ENCODE measurements at regions of chr2 and their contacts with region 1.

Region 1: GRCh38 chr2:95402370-95403203 is at the start of gene FAHD2A:
- DNase-seq: peak; percentile 97 to 99 (median 98)
- ATAC-seq: peak; percentile 95 to 99 (median 98)
- H3K4me3 ChIP-seq: peak within 1 kb of the TSS; percentile 73 to 98 (median 92)
- H3K27ac ChIP-seq: peak within 1 kb of the TSS in 11 of 12 donors; percentile 65 to 89 (median 85)
- H3K4me1 ChIP-seq: peaks cover 0 to 24% (median 14%) of the 10 kb centered on the region in 12 donors
- H3K27me3 ChIP-seq: no peaks in the 10 kb centered on the region
- CTCF ChIP-seq: no peak
- POLR2A ChIP-seq: peak in 1 of 2 donors; percentile 72
- total RNA-seq, gene FAHD2A: 26.2 to 51.7 (median 34.6) TPM

Region 2: DNA sequence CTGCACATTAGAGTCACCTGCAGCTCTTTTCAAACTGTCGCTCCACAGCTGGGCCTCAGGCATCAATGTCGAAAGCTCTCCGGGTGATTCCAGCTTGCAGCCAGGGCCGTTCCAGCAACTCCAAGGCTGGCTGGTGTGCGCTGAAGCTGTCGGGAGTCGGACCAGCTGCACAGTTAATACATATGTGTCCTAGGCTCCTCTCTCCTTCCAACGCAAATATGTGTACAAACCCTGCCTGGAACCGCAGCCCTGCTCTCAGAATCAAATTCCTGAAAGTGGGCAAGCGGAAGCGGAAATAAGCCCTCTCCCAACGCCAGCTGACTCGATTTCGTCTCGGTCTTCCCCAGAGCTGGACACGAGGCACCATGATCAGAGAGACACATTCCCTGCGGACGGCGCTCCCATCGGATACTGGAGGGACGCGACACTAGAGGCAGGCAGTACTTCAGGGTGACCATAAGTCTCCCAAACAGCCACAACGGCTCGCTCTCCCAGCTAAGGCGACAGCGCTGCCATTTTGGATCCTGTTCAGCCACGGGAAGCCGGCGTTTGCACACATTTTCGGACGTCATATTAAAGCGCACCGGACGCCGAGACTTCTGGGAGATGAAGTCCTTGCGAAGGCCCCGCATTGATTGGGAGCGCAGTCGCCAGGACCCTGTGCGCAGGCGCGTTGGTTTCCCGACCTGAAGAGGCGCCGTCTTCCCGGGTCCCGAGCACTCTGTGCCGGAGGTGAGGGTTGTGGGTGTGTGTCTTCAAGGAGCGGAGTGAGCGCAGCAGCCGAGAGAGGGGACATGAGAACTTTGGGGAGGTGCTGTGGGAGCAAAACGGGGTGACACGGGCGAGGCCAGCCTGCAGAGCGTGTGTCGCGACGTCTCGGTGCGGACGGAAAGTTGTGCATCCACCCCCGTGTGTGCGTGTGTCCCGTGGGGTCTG is 237.2 kb before region 1 on chr2 and contains the start of gene ZNF2:
- intact Hi-C with region 1: loop called in 2 of 10 experiments (anchors 2 to 5 kb)
- DNase-seq: peak; percentile 98 to 99 (median 99)
- ATAC-seq: peak; percentile 96 to 99 (median 98)
- H3K4me3 ChIP-seq: peak within 1 kb of the TSS; percentile 65 to 94 (median 81)
- H3K27ac ChIP-seq: peak within 1 kb of the TSS; percentile 65 to 97 (median 94)
- H3K4me1 ChIP-seq: peaks cover 0 to 25% (median 19%) of the 10 kb centered on the region in 12 donors
- H3K27me3 ChIP-seq: no peaks in the 10 kb centered on the region
- CTCF ChIP-seq: peak in 3 of 12 donors; percentile 5 to 17 (median 10)
- POLR2A ChIP-seq: peak in 1 of 2 donors; percentile 71
- total RNA-seq, gene ZNF2: 2.5 to 5.9 (median 3.5) TPM

Region 3: DNA sequence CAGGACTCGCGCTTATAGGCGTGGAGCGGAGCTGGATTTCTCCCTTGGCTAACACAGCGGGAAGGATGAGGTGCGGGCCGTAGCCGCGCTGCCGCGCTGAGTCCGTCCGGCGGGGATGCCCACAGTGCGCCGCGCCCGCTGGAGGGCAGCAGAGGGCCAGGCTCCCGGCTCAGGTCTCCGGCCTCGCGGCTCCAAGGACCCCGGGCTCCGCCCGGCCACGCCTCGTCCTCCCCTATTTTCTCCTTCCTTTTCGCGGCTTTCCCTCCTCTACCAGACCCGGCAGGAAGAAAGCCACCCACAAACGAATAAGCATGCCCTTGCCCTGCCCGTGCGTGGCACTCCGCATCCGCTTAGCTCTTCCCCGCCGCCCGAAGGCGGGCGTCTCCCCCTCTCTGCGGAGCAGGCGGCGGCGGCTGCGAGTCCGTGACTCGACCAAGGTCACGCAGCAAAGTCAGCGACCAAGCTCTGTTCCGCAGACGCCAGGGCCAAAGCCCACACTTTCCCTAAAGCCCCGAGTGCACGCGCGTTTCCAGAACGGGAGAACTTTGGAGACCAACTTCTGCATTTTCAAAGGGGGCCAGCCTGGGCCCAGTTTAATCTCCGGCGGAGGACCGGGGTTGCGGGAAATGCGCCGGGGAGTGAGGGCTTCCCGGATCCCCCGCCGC is 56.9 kb before region 1 on chr2:
- intact Hi-C with region 1: loop called in 3 of 10 experiments (anchors 2 to 5 kb)
- DNase-seq: peak; percentile 78 to 92 (median 86)
- ATAC-seq: peak; percentile 81 to 93 (median 90)
- H3K4me3 ChIP-seq: peak overlapping the region; percentile 42 to 86 (median 67)
- H3K27ac ChIP-seq: peak overlapping the region in 11 of 12 donors; percentile 49 to 89 (median 79)
- H3K4me1 ChIP-seq: peaks cover 0 to 31% (median 9%) of the 10 kb centered on the region in 12 donors
- H3K27me3 ChIP-seq: peaks cover 0 to 34% (median 5%) of the 10 kb centered on the region in 9 donors
- CTCF ChIP-seq: peak; percentile 84 to 97 (median 92)
- POLR2A ChIP-seq: no peak

Region 4: DNA sequence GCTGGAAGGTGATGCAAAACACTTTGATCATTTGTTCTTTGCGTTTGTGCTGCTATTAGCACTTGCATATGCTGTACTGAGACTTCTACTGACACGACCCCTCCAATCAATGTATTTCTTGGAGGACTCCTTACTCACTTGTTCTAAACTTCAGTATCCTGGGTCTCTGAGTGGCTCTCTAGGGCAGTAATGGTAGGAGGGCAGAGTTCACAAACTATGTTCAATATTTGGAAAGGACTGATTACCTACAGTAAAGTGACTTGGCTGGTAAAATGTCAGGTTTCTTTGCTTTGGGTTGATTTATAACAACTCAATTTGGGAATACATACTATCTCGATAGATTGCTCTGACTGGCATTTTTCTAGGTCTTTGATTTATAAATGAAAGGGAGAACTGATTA is 282.9 kb after region 1 on chr2:
- intact Hi-C with region 1: no loop called
- DNase-seq: no peak
- ATAC-seq: no peak
- H3K4me3 ChIP-seq: no peak overlapping the region
- H3K27ac ChIP-seq: no peak overlapping the region
- H3K4me1 ChIP-seq: peaks cover 0 to 20% (median 6%) of the 10 kb centered on the region in 12 donors
- H3K27me3 ChIP-seq: no peaks in the 10 kb centered on the region
- CTCF ChIP-seq: no peak
- POLR2A ChIP-seq: no peak

Region 5: GRCh38 chr2:95728878-95729596 is 326.4 kb after region 1 on chr2:
- intact Hi-C with region 1: loop called in 2 of 10 experiments (anchors 5 kb)
- DNase-seq: peak in 4 of 5 donors; percentile 55 to 66 (median 62)
- ATAC-seq: peak; percentile 87 to 96 (median 93)
- H3K4me3 ChIP-seq: no peak overlapping the region
- H3K27ac ChIP-seq: no peak overlapping the region
- H3K4me1 ChIP-seq: no peaks in the 10 kb centered on the region
- H3K27me3 ChIP-seq: peaks cover 0 to 7% (median 0%) of the 10 kb centered on the region in 9 donors
- CTCF ChIP-seq: peak; percentile 44 to 76 (median 71)
- POLR2A ChIP-seq: no peak

Measured in heart left ventricle (tissue), 16 donors.